HCT116 (cell line): ENCODE measurements at regions of chr15 and their contacts with region 1.

Region 1: DNA sequence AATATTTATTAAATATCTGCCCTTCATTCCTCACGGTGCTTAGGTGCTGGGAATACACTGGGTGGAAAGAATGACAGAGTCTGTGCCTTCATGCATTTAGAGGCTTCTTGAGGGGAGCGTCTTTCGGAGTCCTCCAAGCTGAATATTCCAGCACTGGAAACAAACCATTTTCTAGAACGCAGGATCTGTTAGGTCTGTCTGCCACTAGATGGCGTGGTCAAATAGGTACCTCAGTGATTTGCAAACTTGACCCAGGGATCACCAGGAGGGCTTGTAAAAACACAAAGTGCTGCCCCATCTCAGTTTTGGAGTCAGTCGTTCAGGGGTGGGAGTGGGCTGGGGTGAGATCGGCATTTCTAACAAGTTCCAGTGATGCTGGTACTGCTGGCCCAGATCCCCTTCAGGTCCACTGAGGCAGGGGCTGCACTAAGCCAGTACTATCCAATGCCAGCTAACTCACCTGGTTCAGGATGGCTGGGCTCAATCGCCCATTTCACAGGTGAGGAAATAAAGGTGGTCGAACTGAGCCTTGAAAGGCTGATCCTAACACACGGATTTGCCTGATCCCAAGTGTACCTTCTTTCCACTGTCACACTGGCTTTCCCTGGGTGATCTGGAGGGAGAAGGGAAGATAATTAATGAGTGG is 14.8 kb downstream of the ARNT2 start:
- DNase-seq: peak; percentile 34
- ATAC-seq: peak; percentile 83
- H3K4me3 ChIP-seq: no peak overlapping the region
- H3K27ac ChIP-seq: no peak overlapping the region
- H3K4me1 ChIP-seq: no peaks in the 10 kb centered on the region
- H3K27me3 ChIP-seq: no peaks in the 10 kb centered on the region
- CTCF ChIP-seq: peak; percentile 53 to 88 (median 82); a peak in 5 of 6 replicates
- POLR2A ChIP-seq: no peak
- RAD21 ChIP-seq: peak; percentile 54; the same call in 1 of the 2 replicates

Region 2: DNA sequence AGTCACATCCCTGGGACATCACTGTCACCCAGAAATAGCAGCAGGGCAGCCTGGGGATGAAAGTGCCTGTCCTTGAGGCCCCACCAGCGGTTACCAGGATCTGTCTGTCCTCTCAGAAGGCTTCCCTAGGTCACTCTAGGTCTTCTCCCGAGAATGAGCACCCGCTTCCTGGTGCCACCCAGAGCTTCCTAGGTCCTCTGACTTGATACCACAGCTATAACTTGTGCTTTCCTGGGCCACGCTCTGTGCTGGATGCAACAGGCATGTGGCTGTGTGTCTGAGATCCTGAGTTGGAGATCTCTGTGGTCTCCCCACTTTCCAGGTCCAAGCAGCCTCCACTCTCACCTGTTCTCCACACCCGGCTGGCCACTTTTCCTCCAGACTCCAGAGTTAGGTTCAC is 10.9 kb after region 1 on chr15:
- CTCF ChIA-PET with region 1: interaction called, 16 read pairs
- POLR2A ChIA-PET with region 1: no interaction called
- RAD21 ChIA-PET with region 1: no interaction called
- intact Hi-C with region 1: no loop called
- DNase-seq: no peak
- ATAC-seq: no peak
- H3K4me3 ChIP-seq: no peak overlapping the region
- H3K27ac ChIP-seq: no peak overlapping the region
- H3K4me1 ChIP-seq: no peaks in the 10 kb centered on the region
- H3K27me3 ChIP-seq: no peaks in the 10 kb centered on the region
- CTCF ChIP-seq: no peak
- POLR2A ChIP-seq: no peak
- RAD21 ChIP-seq: no peak

Region 3: DNA sequence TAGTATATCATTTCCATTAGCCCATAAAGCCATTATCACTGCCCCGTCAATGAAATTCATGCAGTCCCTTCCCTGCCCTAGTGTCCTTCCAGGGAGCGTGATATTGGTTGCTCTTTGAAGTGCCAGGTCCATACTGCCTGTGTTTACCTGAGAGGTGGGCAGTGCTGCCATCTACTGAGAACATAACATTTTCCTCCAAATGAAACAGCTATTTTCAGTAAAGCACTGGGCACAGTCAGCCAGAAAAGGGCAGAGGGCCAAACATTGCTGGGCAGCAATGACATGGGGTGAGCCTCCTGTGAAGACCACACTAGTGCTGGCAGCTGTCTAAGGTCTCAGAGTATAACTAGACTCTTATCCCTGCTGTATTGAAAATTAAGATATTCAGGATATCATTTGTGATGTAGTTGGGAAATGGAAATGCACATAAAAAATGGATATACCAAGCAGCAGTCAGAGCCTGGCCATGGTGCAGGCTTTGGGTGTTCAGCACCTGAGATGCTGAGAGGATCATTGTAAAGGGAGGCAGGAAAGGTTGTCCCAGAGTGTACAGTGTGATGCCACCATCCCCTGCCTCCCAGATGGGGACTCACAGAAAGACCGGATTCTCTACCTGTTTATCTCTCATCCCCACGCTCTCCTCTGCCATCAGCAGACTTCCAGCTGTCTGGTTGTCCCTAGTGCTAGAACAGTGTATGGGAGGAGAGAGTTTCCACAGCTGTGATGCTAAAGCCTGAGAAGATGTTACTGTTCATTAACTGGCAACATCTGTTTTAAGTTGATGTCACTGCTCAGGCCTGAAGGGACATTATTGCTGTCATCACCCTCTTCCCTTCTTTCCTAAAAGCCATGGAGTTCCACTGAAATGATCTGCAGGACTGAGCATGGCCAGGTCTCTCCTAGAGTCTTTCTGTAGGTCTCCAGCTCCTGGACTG is 94.0 kb after region 1 on chr15:
- CTCF ChIA-PET with region 1: interaction called, 3 read pairs
- POLR2A ChIA-PET with region 1: no interaction called
- RAD21 ChIA-PET with region 1: no interaction called
- intact Hi-C with region 1: loop called (anchors 1 kb)
- DNase-seq: peak; percentile 6
- ATAC-seq: peak; percentile 83
- H3K4me3 ChIP-seq: no peak overlapping the region
- H3K27ac ChIP-seq: no peak overlapping the region
- H3K4me1 ChIP-seq: no peaks in the 10 kb centered on the region
- H3K27me3 ChIP-seq: no peaks in the 10 kb centered on the region
- CTCF ChIP-seq: peak; percentile 20 to 38 (median 35); a peak in 3 of 6 replicates
- POLR2A ChIP-seq: no peak
- RAD21 ChIP-seq: peak; percentile 53